PC-3 (cell line): ENCODE measurements at regions of chr14 and their contacts with region 1.

Region 1: GRCh38 chr14:27528328-27528727 is 930.5 kb upstream of the NOVA1 start:
- DNase-seq: peak; percentile 57
- ATAC-seq: peak; percentile 96
- H3K4me3 ChIP-seq: no peak overlapping the region
- H3K27ac ChIP-seq: no peak overlapping the region
- H3K4me1 ChIP-seq: no peaks in the 10 kb centered on the region
- H3K27me3 ChIP-seq: no peaks in the 10 kb centered on the region
- CTCF ChIP-seq: peak; percentile 83

Region 2: GRCh38 chr14:26905225-26905624 is 623.1 kb before region 1 on chr14:
- CTCF ChIA-PET with region 1: no interaction called
- POLR2A ChIA-PET with region 1: no interaction called
- intact Hi-C with region 1: loop called (anchors 5 kb)
- DNase-seq: peak; percentile 13
- ATAC-seq: peak; percentile 45; the same call in 1 of the 2 replicates
- H3K4me3 ChIP-seq: no peak overlapping the region
- H3K27ac ChIP-seq: no peak overlapping the region
- H3K4me1 ChIP-seq: no peaks in the 10 kb centered on the region
- H3K27me3 ChIP-seq: no peaks in the 10 kb centered on the region
- CTCF ChIP-seq: no peak; the same call in 1 of the 2 replicates

Region 3: DNA sequence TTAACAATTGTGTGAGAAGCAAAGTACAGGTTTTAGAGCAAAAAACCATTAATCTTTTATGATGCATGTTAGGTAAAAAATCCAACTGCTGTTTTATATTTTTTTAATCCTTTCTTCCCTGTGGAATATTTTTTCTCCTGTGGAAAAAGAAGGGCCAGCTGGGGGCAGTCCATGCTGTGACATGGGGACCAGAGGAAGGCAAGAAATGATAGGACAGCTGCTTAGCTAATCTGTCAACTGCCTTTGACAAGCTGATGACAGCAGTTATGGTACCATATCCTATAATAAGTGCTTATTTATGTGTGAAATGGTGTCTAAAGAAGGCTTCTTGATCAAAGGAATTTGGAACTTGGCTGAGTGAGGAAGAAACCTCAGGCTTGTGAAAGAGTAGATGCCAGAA is 478.1 kb before region 1 on chr14:
- CTCF ChIA-PET with region 1: no interaction called
- POLR2A ChIA-PET with region 1: no interaction called
- intact Hi-C with region 1: loop called (anchors 1 kb)
- DNase-seq: no peak
- ATAC-seq: peak; percentile 29; the same call in 1 of the 2 replicates
- H3K4me3 ChIP-seq: no peak overlapping the region
- H3K27ac ChIP-seq: no peak overlapping the region
- H3K4me1 ChIP-seq: no peaks in the 10 kb centered on the region
- H3K27me3 ChIP-seq: no peaks in the 10 kb centered on the region
- CTCF ChIP-seq: no peak; the same call in 1 of the 2 replicates

Region 4: DNA sequence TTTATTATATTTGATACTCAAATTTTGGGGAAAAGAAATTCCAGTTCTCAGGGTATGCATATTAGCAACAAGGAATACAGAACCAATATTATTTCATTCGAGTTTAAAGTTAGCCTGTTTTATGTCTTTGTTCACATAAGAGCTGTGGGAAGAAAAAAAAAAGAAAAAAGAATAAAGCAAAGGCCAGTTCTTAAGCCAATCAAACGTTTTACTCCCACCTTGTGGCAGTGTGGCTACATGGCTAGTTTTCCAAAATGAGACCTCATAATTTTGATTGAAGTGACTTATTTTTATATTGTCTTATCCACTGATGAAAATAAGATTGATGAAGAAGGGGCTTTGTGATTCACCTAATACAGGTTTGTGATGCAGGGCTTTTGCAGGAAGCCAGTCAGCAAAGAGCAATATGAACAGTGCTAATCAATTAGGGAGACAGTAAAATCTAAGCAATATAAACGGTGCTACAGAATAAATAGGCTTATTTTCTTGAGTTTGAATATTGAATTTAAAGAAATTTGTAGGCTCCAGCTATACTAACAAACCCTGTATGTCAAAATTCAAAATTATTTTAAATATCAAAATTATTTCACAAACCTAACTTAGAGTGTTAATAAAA is 614.2 kb after region 1 on chr14:
- CTCF ChIA-PET with region 1: no interaction called
- POLR2A ChIA-PET with region 1: no interaction called
- intact Hi-C with region 1: loop called (anchors 2 kb)
- DNase-seq: peak; percentile 65
- ATAC-seq: peak; percentile 52
- H3K4me3 ChIP-seq: no peak overlapping the region
- H3K27ac ChIP-seq: no peak overlapping the region
- H3K4me1 ChIP-seq: no peaks in the 10 kb centered on the region
- H3K27me3 ChIP-seq: no peaks in the 10 kb centered on the region
- CTCF ChIP-seq: peak; percentile 81